ENCODE measurements at regions of chr1 and their contacts with region 1.

Region 1: GRCh38 chr1:172727956-172728603 is 69.2 kb downstream of the FASLG start:
- DNase-seq: peak in 7 of 14 experiments; percentile 19 to 78 (median 39)
- ATAC-seq: peak; percentile 98
- H3K4me3 ChIP-seq: no peak overlapping the region
- H3K4me3 Mint-ChIP-seq: no peak overlapping the region
- H3K27ac ChIP-seq: no peak overlapping the region
- H3K27ac Mint-ChIP-seq: no peak overlapping the region
- H3K4me1 ChIP-seq: peaks cover 8% of the 10 kb centered on the region
- H3K4me1 Mint-ChIP-seq: peaks cover 22% of the 10 kb centered on the region
- H3K27me3 ChIP-seq: no peaks in the 10 kb centered on the region
- H3K27me3 Mint-ChIP-seq: no peaks in the 10 kb centered on the region
- CTCF ChIP-seq: peak; percentile 64

Region 2: DNA sequence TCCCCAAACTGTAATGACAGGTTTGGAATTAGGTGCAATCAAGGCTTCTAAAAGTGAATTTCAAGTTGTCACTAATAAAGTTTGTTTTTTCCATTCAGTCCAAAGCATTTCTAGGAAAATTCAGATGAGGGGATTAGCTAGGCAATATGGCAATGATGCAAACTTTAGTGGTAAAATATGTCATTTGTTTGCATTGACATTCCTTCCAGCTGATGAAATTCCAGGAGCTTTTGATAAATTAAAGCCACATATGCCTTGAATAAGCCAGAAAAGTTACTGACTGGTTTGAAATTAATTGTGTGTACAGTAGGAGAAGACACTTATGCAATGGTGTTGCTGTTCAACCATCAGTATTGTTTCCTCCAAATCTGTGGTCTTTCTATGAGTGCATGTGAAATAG is 1734.9 kb before region 1 on chr1:
- CTCF ChIA-PET with region 1: no interaction called
- POLR2A ChIA-PET with region 1: no interaction called
- intact Hi-C with region 1: no loop called
- DNase-seq: no peak
- ATAC-seq: no peak
- H3K4me3 ChIP-seq: no peak overlapping the region
- H3K4me3 Mint-ChIP-seq: no peak overlapping the region
- H3K27ac ChIP-seq: no peak overlapping the region
- H3K27ac Mint-ChIP-seq: no peak overlapping the region
- H3K4me1 ChIP-seq: no peaks in the 10 kb centered on the region
- H3K4me1 Mint-ChIP-seq: no peaks in the 10 kb centered on the region
- H3K27me3 ChIP-seq: peaks cover 0 to 3% of the 10 kb centered on the region in 2 experiments
- H3K27me3 Mint-ChIP-seq: peaks cover 5% of the 10 kb centered on the region
- CTCF ChIP-seq: no peak

Region 3: GRCh38 chr1:171990371-171990770 is 737.7 kb before region 1 on chr1:
- CTCF ChIA-PET with region 1: no interaction called
- POLR2A ChIA-PET with region 1: no interaction called
- intact Hi-C with region 1: loop called in 1 of 2 experiments (anchors 5 kb)
- DNase-seq: no peak
- ATAC-seq: no peak
- H3K4me3 ChIP-seq: no peak overlapping the region
- H3K4me3 Mint-ChIP-seq: no peak overlapping the region
- H3K27ac ChIP-seq: no peak overlapping the region
- H3K27ac Mint-ChIP-seq: no peak overlapping the region
- H3K4me1 ChIP-seq: no peaks in the 10 kb centered on the region
- H3K4me1 Mint-ChIP-seq: no peaks in the 10 kb centered on the region
- H3K27me3 ChIP-seq: no peaks in the 10 kb centered on the region
- H3K27me3 Mint-ChIP-seq: no peaks in the 10 kb centered on the region
- CTCF ChIP-seq: no peak

Measured in CD4-positive, alpha-beta T cell (primary cell).